ENCODE measurements at regions of chr5 and their contacts with region 1.

Region 1: DNA sequence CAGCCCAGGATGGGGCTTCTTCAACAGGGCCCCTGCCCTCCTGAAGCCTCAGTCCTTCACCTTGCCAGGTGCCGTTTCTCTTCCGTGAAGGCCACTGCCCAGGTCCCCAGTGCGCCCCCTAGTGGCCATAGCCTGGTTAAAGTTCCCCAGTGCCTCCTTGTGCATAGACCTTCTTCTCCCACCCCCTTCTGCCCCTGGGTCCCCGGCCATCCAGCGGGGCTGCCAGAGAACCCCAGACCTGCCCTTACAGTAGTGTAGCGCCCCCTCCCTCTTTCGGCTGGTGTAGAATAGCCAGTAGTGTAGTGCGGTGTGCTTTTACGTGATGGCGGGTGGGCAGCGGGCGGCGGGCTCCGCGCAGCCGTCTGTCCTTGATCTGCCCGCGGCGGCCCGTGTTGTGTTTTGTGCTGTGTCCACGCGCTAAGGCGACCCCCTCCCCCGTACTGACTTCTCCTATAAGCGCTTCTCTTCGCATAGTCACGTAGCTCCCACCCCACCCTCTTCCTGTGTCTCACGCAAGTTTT is 23.6 kb downstream of the PCDHGC5 start:
- DNase-seq: peak; percentile 78 to 89
- H3K4me3 ChIP-seq: peak overlapping the region; percentile 59 to 66 (median 60)
- H3K27ac ChIP-seq: peak overlapping the region; percentile 78 to 90
- H3K4me1 ChIP-seq: peaks cover 11 to 21% of the 10 kb centered on the region in 2 donors
- H3K27me3 ChIP-seq: no peaks in the 10 kb centered on the region
- CTCF ChIP-seq: peak; percentile 56 to 75 (median 71)
- POLR2A ChIP-seq: no peak

Region 2: GRCh38 chr5:140710899-140711552 is 801.4 kb before region 1 on chr5:
- intact Hi-C with region 1: loop called (anchors 5 kb)
- DNase-seq: peak; percentile 82 to 96
- H3K4me3 ChIP-seq: peak overlapping the region; percentile 48 to 81 (median 57)
- H3K27ac ChIP-seq: peak overlapping the region; percentile 93 to 97
- H3K4me1 ChIP-seq: no peaks in the 10 kb centered on the region
- H3K27me3 ChIP-seq: no peaks in the 10 kb centered on the region
- CTCF ChIP-seq: no peak
- POLR2A ChIP-seq: peak; percentile 38

Region 3: DNA sequence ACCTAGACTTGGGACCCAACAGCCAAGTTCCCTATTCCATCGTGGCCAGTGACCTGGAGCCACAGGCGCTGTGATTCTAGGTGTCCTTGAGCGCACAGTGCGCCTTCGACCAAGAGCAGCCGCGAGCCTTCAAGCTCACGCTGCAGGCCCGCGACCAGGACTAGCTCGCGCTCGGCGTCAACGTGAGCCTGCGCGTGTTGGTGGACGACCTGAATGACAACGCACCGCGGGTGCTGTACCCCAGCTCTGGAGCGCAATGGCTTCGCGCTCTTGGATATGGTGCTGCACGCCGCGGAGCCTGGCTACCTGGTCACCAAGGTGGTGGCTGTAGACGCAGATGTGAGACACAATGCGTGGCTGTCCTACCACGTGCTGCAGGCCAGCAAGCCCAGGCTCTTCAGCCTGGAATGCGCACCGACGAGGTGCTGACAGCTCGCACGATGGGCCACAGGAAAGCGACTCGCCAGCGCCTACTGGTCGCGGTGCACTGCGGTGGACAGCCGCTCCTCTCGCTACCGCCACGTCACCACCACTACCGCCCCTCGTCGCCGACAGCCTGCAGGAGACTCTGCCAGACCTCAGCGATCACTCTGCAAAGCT is 70.8 kb before region 1 on chr5:
- intact Hi-C with region 1: loop called (anchors 2 kb)
- DNase-seq: no peak
- H3K4me3 ChIP-seq: peak overlapping the region in 1 of 3 donors; percentile 13
- H3K27ac ChIP-seq: no peak overlapping the region
- H3K4me1 ChIP-seq: no peaks in the 10 kb centered on the region
- H3K27me3 ChIP-seq: no peaks in the 10 kb centered on the region
- CTCF ChIP-seq: no peak
- POLR2A ChIP-seq: no peak

Region 4: GRCh38 chr5:141485321-141486055 is 27.0 kb before region 1 on chr5:
- intact Hi-C with region 1: loop called (anchors 1 kb)
- DNase-seq: no peak
- H3K4me3 ChIP-seq: peak overlapping the region; percentile 15 to 58 (median 44)
- H3K27ac ChIP-seq: no peak overlapping the region
- H3K4me1 ChIP-seq: peaks cover 0 to 6% of the 10 kb centered on the region in 2 donors
- H3K27me3 ChIP-seq: no peaks in the 10 kb centered on the region
- CTCF ChIP-seq: no peak
- POLR2A ChIP-seq: no peak

Measured in breast epithelium (tissue), 4 donors.